ENCODE measurements at regions of chr11 and their contacts with region 1.

Region 1: GRCh38 chr11:69567951-69568808 is 72.8 kb upstream of the CCND1 start:
- DNase-seq: no peak
- H3K4me3 ChIP-seq: no peak overlapping the region
- H3K27ac ChIP-seq: no peak overlapping the region
- H3K4me1 ChIP-seq: no peaks in the 10 kb centered on the region
- H3K27me3 ChIP-seq: no peaks in the 10 kb centered on the region
- CTCF ChIP-seq: no peak
- EP300 ChIP-seq: no peak
- POLR2A ChIP-seq: no peak

Region 2: DNA sequence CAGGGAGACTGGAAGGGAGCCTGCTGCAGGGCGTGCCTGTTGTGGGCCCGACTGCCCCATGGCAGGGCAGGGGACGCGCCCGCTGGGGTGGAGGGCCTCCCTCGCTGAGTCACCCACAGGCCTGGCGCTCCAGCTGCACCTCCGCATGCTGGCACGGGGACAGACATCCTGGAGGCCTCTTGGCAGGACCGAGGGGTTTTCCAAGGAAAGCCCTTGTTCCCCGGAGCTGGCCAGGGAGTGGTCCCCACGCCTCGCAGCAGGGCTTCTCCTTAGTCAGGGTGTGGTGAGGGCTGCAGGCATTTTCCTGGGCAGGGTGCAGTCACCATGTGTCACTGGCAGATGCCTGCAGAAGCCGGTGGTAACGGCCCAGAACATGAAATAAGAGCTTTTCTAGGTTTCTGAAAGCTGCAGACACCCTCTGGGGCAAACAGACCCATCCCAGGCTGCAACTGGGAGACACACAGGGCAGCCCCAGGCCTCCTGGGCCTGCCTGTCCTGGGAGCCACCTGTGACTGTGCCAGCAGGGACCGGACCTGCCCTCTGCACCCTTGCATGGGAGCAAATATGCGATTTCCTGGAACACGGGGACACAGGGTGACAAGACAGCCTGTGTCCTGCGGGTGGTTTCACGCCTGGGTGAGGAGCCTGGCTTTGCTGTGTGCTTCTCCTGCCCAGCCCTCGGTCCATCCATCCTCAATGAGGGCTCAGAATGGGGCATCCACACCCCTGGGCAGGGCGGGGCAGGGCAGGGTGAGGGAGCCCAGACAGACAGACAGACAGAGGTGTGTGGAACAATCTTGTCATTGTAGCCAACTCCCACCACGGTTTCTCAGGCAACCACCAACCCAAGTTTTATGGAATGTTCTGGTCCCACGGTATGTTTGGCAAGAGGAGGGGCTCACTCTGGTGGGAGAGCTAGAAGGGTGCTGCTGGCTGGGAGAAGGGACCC is 591.7 kb after region 1 on chr11:
- intact Hi-C with region 1: loop called (anchors 10 kb)
- DNase-seq: no peak
- H3K4me3 ChIP-seq: no peak overlapping the region
- H3K27ac ChIP-seq: no peak overlapping the region
- H3K4me1 ChIP-seq: no peaks in the 10 kb centered on the region
- H3K27me3 ChIP-seq: no peaks in the 10 kb centered on the region
- CTCF ChIP-seq: no peak
- EP300 ChIP-seq: no peak
- POLR2A ChIP-seq: no peak